Right cardiac atrium (tissue), 5 donors: ENCODE measurements at regions of chr6 and their contacts with region 1.

Region 1: DNA sequence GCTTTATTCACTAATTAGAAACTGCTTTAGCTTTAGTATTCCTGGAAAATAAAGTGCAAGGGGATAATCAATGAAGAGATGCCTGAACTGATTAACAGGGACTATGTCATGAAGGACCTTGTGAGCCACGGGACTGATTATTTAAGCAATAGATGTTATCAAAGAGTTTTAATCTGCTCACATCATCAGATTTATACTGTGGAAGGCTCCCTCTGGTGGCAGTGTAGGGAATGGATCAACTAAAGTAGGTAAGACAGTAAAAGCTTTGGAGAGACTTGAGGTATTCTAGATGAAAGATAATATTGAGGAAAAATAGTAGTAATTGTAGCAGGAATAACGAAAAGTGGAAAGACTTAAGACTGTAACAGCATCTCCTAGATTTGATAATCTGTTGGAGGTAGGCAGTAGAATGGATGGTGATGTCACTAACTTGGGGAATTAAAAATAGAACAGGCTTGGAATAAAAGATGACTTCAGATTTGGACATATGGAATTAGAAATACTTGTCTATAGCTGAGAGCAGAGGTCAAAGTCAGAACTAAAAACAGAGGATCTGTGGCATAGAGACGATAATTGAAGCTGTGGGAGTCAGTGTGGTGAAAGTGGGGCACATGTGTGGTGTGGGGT is 80.3 kb upstream of the HTR1E start:
- DNase-seq: no peak
- ATAC-seq: no peak
- H3K4me3 ChIP-seq: no peak overlapping the region
- H3K27ac ChIP-seq: no peak overlapping the region
- H3K4me1 ChIP-seq: no peaks in the 10 kb centered on the region
- H3K27me3 ChIP-seq: no peaks in the 10 kb centered on the region

Region 2: GRCh38 chr6:85756982-85757381 is 1100.1 kb before region 1 on chr6:
- intact Hi-C with region 1: loop called in 1 of 4 experiments (anchors 10 kb)
- DNase-seq: no peak
- ATAC-seq: no peak
- H3K4me3 ChIP-seq: no peak overlapping the region
- H3K27ac ChIP-seq: no peak overlapping the region
- H3K4me1 ChIP-seq: no peaks in the 10 kb centered on the region
- H3K27me3 ChIP-seq: no peaks in the 10 kb centered on the region

Region 3: DNA sequence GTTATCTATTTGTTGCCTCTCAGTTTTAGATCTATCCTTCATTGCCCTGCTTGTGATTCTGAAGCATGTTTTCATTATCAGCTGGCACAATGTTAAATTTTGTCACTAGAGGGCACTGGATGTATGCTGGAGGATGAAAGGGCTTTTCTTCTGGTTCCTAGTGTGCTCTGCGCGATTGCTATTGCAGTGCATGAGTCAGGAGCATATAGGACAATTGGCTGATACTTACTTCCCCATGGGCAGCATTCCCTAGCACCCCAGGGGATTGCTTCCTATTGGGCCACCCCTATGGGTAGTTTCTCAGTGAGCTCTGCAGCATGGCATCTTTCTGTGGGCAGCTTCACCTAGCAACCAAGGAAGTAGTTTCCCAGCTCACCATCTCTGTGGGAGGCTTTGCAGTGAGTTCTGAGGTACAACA is 934.0 kb before region 1 on chr6:
- intact Hi-C with region 1: loop called in 2 of 4 experiments (anchors 5 to 10 kb)
- DNase-seq: no peak
- ATAC-seq: peak in 1 of 2 donors; percentile 40
- H3K4me3 ChIP-seq: no peak overlapping the region
- H3K27ac ChIP-seq: no peak overlapping the region
- H3K4me1 ChIP-seq: no peaks in the 10 kb centered on the region
- H3K27me3 ChIP-seq: no peaks in the 10 kb centered on the region

Region 4: DNA sequence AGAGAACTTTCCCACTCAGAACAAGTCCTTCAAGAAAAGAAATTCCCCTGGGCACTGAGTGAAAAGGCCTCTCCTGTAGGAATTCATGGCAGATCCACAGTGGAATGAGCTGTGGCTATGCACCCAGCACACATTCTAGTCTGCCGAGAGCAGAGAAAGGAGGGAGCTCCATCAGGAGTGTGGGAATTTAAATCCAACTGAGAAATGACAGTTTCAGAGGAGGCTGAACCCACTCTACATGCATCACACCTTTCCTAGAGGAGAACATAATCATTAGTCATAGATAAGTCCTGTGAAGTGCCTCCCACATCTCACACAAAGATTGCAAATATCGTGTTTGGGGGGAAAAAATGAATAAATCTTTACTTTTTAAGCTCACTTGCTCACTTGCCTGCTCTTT is 449.9 kb before region 1 on chr6:
- intact Hi-C with region 1: no loop called
- DNase-seq: no peak
- ATAC-seq: no peak
- H3K4me3 ChIP-seq: no peak overlapping the region
- H3K27ac ChIP-seq: no peak overlapping the region
- H3K4me1 ChIP-seq: no peaks in the 10 kb centered on the region
- H3K27me3 ChIP-seq: no peaks in the 10 kb centered on the region

Region 5: DNA sequence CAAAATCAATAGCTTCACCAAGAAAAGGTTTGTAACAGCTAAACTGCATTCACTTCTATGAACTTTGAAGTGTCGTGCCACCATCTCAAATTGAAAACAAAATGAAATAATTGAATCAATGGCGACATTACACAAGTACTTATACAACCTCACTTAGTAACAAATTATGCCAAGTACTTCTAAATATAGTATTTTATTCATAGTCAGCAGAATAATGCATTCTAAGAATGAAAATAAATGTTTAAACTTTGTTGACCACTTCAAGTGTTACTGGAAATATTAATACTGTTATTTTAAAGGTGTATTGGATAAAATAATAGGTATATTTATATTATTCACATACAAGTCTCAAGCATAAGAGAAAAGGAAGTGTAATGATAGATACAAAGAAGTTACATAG is 199.9 kb before region 1 on chr6:
- intact Hi-C with region 1: no loop called
- DNase-seq: no peak
- ATAC-seq: no peak
- H3K4me3 ChIP-seq: no peak overlapping the region
- H3K27ac ChIP-seq: no peak overlapping the region
- H3K4me1 ChIP-seq: no peaks in the 10 kb centered on the region
- H3K27me3 ChIP-seq: no peaks in the 10 kb centered on the region